ENCODE measurements at regions of chr12 and their contacts with region 1.

Region 1: DNA sequence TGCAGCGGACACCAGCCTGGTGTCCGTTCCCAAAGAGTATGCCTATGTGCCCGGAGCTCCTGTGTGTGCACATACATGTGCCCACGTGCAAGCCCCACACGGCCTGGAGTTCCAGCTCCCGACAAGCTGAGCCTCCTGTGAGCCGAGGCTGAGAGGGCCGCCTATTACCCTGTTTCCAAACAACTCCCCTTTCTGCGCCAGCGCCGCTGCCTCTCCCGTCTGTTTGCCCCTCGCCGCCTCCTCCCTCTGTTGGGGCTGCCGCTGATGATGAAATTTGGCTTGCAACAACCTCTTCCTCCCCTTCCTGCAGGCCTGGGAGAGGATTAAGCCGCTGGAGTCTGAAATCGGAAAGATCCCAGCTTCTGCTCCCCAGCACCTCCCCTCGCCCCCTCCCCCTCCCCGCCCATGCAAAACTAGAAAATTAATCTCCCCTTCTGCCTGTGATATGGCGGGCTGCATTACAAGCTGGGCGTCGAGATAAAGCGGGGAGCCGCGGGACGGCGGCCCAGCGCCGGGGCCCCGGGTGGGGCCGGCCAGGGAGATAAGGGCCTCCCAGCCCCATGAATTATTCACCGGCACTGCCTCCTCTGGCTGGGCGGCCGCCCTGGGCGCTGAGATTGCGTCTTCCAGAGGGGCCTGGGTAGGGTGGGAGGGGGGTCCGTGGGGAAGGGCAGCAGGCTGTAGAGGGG is 6.8 kb upstream of the ASIC1 start:
- DNase-seq: peak in 1 of 2 donors; percentile 53
- ATAC-seq: peak; percentile 68

Region 2: GRCh38 chr12:48795480-48796455 is 1254.8 kb before region 1 on chr12:
- intact Hi-C with region 1: no loop called
- DNase-seq: peak; percentile 78 to 82
- ATAC-seq: peak; percentile 86

Region 3: GRCh38 chr12:49974231-49974675 is 76.3 kb before region 1 on chr12:
- intact Hi-C with region 1: loop called (anchors 5 to 10 kb)
- DNase-seq: peak; percentile 62 to 63
- ATAC-seq: peak; percentile 83

Measured in left colon (tissue), 2 donors.